Spleen (tissue), 13 donors: ENCODE measurements at regions of chr3 and their contacts with region 1.

Region 1: DNA sequence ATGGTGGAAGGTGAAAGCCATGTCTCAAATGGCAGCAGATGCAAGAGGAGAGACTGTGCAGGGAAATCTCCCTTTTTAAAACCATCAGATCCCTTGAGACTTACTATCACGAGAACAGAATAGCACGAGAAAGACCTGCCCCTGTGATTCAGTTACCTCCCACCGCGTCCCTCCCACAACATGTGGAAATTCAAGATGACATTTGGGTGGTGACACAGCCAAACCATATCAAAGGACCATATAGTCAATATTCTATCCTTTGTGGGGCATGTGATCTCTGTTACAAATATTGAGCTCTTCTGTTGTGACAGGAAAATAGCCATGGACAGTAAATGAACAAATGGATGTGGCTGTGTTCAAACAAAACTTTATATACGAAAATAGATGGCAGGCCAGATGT is 77.2 kb upstream of the ACKR4 start:
- DNase-seq: no peak
- H3K4me3 ChIP-seq: no peak overlapping the region
- H3K27ac ChIP-seq: no peak overlapping the region
- H3K4me1 ChIP-seq: no peaks in the 10 kb centered on the region
- H3K27me3 ChIP-seq: no peaks in the 10 kb centered on the region
- CTCF ChIP-seq: no peak
- POLR2A ChIP-seq: no peak

Region 2: GRCh38 chr3:132456571-132456970 is 63.3 kb before region 1 on chr3:
- intact Hi-C with region 1: loop called (anchors 10 kb)
- DNase-seq: no peak
- H3K4me3 ChIP-seq: no peak overlapping the region
- H3K27ac ChIP-seq: peak overlapping the region in 6 of 8 donors; percentile 0 to 69 (median 30)
- H3K4me1 ChIP-seq: peaks cover 0 to 27% (median 1%) of the 10 kb centered on the region in 6 donors
- H3K27me3 ChIP-seq: no peaks in the 10 kb centered on the region
- CTCF ChIP-seq: no peak
- POLR2A ChIP-seq: no peak

Region 3: GRCh38 chr3:132925256-132925930 is 405.5 kb after region 1 on chr3:
- intact Hi-C with region 1: no loop called
- DNase-seq: no peak
- H3K4me3 ChIP-seq: no peak overlapping the region
- H3K27ac ChIP-seq: no peak overlapping the region
- H3K4me1 ChIP-seq: no peaks in the 10 kb centered on the region
- H3K27me3 ChIP-seq: no peaks in the 10 kb centered on the region
- CTCF ChIP-seq: no peak
- POLR2A ChIP-seq: no peak